ENCODE measurements at regions of chr3 and their contacts with region 1.

Region 1: DNA sequence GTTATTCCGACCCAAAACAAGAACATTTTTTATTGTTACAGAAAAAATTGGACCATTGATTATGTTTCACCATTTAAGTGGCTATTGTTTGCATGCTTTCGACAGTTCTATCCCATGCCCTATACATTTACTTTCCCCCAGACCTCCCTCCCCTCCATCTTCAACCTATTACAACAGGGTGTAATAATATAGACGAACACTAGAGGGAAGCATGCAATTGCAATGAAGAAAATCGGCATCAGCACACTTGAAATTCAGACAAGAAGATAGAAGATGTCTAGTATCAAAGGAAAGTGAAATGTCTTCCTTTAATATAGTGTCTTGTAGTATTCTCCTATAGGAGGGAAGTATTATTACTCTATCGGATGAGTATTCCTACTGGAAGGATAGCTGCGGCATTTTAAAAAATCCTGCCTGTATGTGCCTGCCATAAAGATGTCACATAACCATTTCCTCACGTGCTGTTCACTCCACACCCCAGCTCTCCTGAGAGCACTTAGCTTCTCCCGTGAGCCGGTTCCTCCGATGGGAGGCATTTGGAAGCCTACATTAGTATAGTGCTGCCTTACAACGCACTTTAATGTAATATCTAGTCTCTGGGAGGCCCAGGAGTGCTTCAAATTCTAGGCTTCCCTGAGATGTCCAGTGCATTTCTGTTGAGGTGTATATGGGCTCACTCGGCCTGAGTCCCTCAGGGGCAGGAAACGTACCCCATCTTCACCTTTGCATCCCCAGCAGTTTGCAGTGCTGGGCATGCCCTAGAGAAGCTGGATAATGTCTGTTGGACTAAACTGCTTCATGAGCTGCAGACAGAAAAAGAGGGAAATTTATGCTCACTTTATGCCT is 17.8 kb upstream of the ERICH6 start:
- DNase-seq: no peak
- ATAC-seq: peak; percentile 77
- H3K4me3 Mint-ChIP-seq: no peak overlapping the region
- H3K27ac Mint-ChIP-seq: no peak overlapping the region
- H3K4me1 Mint-ChIP-seq: peaks cover 13% of the 10 kb centered on the region
- H3K27me3 Mint-ChIP-seq: no peaks in the 10 kb centered on the region

Region 2: DNA sequence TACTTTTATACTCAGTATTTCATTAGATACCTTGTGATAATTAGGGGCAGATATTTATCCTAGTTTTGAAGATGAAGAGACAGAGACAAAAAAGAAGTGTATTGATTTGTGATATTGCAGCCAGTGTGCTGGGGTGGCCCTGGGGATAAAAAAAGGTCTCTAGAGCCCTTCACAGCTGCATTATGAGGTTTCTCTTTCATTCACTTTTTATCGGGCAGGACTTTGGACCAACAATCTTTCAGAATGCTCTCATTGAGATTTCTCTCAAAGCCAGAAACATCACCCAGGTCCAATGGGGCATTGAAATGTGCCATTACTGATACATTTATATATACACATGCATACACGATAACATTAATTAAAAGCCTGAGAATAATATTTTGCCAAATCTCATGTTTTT is 138.9 kb before region 1 on chr3:
- CTCF ChIA-PET with region 1: no interaction called
- POLR2A ChIA-PET with region 1: no interaction called
- DNase-seq: no peak
- ATAC-seq: no peak
- H3K4me3 Mint-ChIP-seq: no peak overlapping the region
- H3K27ac Mint-ChIP-seq: peak overlapping the region; percentile 12
- H3K4me1 Mint-ChIP-seq: peaks cover 14% of the 10 kb centered on the region
- H3K27me3 Mint-ChIP-seq: no peaks in the 10 kb centered on the region

Region 3: DNA sequence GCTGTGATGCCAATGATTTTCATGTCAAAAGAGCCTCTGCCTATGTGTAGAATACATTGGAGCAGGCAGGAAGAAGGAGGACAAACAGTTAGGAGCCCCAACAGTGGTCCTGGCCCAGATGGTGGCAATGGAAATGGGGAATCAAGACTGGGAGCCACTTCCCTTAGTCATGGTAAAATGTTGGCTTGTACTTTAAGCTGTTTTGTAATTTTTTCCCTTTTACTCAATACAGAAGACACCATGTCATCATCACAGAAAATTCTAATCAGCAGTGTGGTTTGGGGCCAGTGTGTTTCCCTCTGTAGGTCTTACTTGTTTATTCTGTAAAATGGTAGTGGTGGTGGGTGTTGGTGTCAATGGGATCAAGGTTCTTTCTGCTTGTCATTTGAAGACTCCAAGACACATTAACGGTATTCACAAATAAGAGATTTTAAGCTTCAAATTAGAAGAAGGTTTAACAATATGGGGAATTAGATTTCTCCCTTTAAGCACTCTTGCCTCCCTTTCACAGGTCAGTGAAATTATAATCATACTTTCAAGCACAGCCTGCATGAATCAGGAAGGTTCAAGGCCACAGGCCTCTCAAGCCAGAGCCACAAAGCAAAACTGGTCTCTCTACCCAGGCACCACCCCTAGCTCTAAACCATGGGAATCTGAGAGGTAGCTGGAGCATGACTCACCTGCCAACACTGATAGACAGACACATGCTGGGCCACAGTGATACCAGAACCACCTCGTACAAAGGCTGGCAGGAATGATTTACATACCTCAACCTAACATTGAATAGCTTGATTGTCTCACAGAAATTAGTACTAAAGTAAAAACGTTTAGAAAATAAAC is 16.6 kb after region 1 on chr3:
- CTCF ChIA-PET with region 1: interaction called, 17 read pairs
- POLR2A ChIA-PET with region 1: interaction called, 3 read pairs
- DNase-seq: no peak
- ATAC-seq: peak; percentile 43
- H3K4me3 Mint-ChIP-seq: no peak overlapping the region
- H3K27ac Mint-ChIP-seq: no peak overlapping the region
- H3K4me1 Mint-ChIP-seq: peaks cover 45% of the 10 kb centered on the region
- H3K27me3 Mint-ChIP-seq: no peaks in the 10 kb centered on the region

Region 4: GRCh38 chr3:150787741-150788370 is 66.3 kb after region 1 on chr3:
- CTCF ChIA-PET with region 1: interaction called, 21 read pairs
- POLR2A ChIA-PET with region 1: no interaction called
- DNase-seq: peak; percentile 86
- ATAC-seq: peak; percentile 93
- H3K4me3 Mint-ChIP-seq: no peak overlapping the region
- H3K27ac Mint-ChIP-seq: no peak overlapping the region
- H3K4me1 Mint-ChIP-seq: peaks cover 9% of the 10 kb centered on the region
- H3K27me3 Mint-ChIP-seq: peaks cover 13% of the 10 kb centered on the region

Region 5: GRCh38 chr3:150861851-150862250 is 140.3 kb after region 1 on chr3:
- CTCF ChIA-PET with region 1: interaction called, 25 read pairs
- POLR2A ChIA-PET with region 1: no interaction called
- DNase-seq: no peak
- ATAC-seq: no peak
- H3K4me3 Mint-ChIP-seq: no peak overlapping the region
- H3K27ac Mint-ChIP-seq: no peak overlapping the region
- H3K4me1 Mint-ChIP-seq: peaks cover 2% of the 10 kb centered on the region
- H3K27me3 Mint-ChIP-seq: peaks cover 26% of the 10 kb centered on the region

Region 6: GRCh38 chr3:150870396-150870795 is 148.9 kb after region 1 on chr3:
- CTCF ChIA-PET with region 1: interaction called, 11 read pairs
- POLR2A ChIA-PET with region 1: no interaction called
- DNase-seq: no peak
- ATAC-seq: no peak
- H3K4me3 Mint-ChIP-seq: no peak overlapping the region
- H3K27ac Mint-ChIP-seq: no peak overlapping the region
- H3K4me1 Mint-ChIP-seq: peaks cover under 1% of the 10 kb centered on the region
- H3K27me3 Mint-ChIP-seq: peaks cover 14% of the 10 kb centered on the region

Region 7: DNA sequence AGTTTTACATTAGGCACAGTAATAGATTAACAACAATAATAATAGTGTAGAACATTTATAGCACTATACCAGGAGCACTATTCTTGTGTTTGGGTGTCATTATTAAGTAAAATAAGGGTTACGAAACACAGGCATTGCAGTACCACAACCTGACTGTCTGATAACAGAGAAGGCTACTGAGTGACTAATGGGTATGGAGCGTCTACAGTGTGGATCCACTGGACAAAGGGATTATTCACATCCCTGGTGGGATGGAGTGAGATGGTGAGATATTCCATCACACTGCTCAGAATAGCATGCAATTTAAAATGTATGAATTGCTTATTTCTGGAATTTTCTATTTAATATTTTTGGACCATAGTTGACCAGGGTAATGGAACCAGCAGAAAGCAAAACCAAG is 165.5 kb after region 1 on chr3:
- CTCF ChIA-PET with region 1: no interaction called
- POLR2A ChIA-PET with region 1: no interaction called
- DNase-seq: no peak
- ATAC-seq: no peak
- H3K4me3 Mint-ChIP-seq: no peak overlapping the region
- H3K27ac Mint-ChIP-seq: no peak overlapping the region
- H3K4me1 Mint-ChIP-seq: no peaks in the 10 kb centered on the region
- H3K27me3 Mint-ChIP-seq: peaks cover 18% of the 10 kb centered on the region